Activated CD8-positive, alpha-beta T cell treated with anti-CD3 and anti-CD28 coated beads for 36 hours (primary cell): ENCODE measurements at regions of chr15 and their contacts with region 1.

Region 1: GRCh38 chr15:70466895-70467529 is 296.3 kb downstream of the UACA start:
- DNase-seq: peak; percentile 72
- ATAC-seq: peak; percentile 88
- H3K4me3 Mint-ChIP-seq: no peak overlapping the region
- H3K27ac Mint-ChIP-seq: no peak overlapping the region
- H3K4me1 Mint-ChIP-seq: no peaks in the 10 kb centered on the region
- H3K27me3 Mint-ChIP-seq: peaks cover 16% of the 10 kb centered on the region
- CTCF ChIP-seq: peak; percentile 68

Region 2: GRCh38 chr15:69475769-69476358 is 991.1 kb before region 1 on chr15:
- CTCF ChIA-PET with region 1: interaction called, 11 read pairs
- POLR2A ChIA-PET with region 1: no interaction called
- intact Hi-C with region 1: loop called (anchors 10 kb)
- DNase-seq: peak; percentile 81
- ATAC-seq: peak; percentile 89
- H3K4me3 Mint-ChIP-seq: no peak overlapping the region
- H3K27ac Mint-ChIP-seq: no peak overlapping the region
- H3K4me1 Mint-ChIP-seq: peaks cover 2% of the 10 kb centered on the region
- H3K27me3 Mint-ChIP-seq: peaks cover 9% of the 10 kb centered on the region
- CTCF ChIP-seq: peak; percentile 95

Region 3: GRCh38 chr15:69576035-69576526 is 890.9 kb before region 1 on chr15:
- CTCF ChIA-PET with region 1: interaction called, 5 read pairs
- POLR2A ChIA-PET with region 1: no interaction called
- intact Hi-C with region 1: loop called (anchors 10 kb)
- DNase-seq: peak; percentile 78
- ATAC-seq: peak; percentile 43
- H3K4me3 Mint-ChIP-seq: no peak overlapping the region
- H3K27ac Mint-ChIP-seq: no peak overlapping the region
- H3K4me1 Mint-ChIP-seq: peaks cover 32% of the 10 kb centered on the region
- H3K27me3 Mint-ChIP-seq: no peaks in the 10 kb centered on the region
- CTCF ChIP-seq: peak; percentile 69

Region 4: DNA sequence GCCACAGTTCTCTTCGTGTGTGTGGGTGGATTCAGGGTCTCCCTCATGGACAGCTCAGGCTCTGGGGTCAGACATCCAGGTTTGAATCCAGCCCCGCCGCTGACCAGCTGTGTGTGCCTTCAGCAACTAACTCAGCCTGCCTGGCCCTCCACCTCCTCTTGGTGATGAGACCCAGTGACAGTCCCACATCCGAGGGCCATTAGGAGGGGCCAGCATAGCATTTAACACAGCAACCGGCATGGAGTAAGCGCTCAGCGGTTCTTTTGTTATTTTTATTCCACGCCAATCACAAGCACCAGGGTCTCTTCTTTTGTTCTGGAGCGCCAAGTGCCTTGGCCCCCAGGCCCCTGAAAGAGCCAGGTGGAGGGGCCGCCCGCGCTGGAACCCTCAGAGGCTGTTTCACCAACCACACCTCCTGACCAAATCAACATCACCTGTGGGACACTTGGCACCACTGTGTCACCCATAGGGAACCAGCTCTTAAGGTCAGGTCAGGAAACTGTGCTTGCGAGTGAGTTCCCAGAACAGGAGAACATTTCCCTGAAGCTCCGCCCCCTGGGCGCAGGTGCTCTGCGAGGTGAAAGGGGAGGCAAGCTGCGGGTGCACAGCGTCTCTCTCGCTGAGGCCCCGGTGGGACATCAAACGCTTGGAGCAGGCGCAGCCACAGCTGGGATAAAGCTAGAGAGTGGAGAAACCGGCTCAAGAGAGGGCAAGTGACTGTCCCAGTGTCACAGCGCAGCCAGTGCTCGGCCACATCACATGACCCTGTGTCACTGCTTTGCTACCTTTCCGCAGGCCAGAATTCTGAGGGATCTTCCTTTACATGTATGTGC is 15.0 kb before region 1 on chr15:
- CTCF ChIA-PET with region 1: interaction called, 20 read pairs
- POLR2A ChIA-PET with region 1: interaction called, 3 read pairs
- intact Hi-C with region 1: no loop called
- DNase-seq: peak; percentile 74
- ATAC-seq: peak; percentile 63
- H3K4me3 Mint-ChIP-seq: no peak overlapping the region
- H3K27ac Mint-ChIP-seq: peak overlapping the region; percentile 45
- H3K4me1 Mint-ChIP-seq: peaks cover 42% of the 10 kb centered on the region
- H3K27me3 Mint-ChIP-seq: peaks cover 3% of the 10 kb centered on the region
- CTCF ChIP-seq: no peak

Region 5: DNA sequence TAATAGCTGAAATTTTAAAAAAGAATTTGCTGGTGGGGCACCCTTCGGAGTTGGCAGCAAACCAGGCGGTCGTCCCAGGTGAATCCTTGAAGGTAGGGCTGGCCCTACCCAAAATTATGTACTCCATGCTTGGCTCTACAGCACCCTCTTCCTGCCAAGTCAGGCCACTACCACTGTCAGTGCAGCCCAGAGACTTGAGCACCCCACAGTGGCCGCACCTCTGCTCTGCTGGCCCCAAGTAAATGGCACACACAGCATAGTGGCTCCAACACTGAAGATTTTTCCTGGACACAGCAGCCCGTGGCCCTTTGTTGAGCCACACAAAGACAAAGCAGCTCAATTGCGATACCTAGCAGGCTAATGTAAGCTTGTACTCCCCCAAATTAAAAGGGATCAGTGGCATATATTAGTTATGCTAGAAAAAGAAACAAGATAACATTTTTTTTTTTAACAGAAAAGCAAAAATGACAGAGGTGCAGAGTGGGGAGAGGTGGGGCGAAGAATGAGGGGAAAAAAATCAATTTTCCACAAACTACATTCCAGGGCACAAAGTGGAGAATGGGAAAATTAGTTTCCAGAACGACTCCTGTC is 45.9 kb after region 1 on chr15:
- CTCF ChIA-PET with region 1: interaction called, 37 read pairs
- POLR2A ChIA-PET with region 1: no interaction called
- intact Hi-C with region 1: no loop called
- DNase-seq: peak; percentile 85
- ATAC-seq: peak; percentile 88
- H3K4me3 Mint-ChIP-seq: no peak overlapping the region
- H3K27ac Mint-ChIP-seq: no peak overlapping the region
- H3K4me1 Mint-ChIP-seq: peaks cover 22% of the 10 kb centered on the region
- H3K27me3 Mint-ChIP-seq: peaks cover 2% of the 10 kb centered on the region
- CTCF ChIP-seq: peak; percentile 98

Region 6: DNA sequence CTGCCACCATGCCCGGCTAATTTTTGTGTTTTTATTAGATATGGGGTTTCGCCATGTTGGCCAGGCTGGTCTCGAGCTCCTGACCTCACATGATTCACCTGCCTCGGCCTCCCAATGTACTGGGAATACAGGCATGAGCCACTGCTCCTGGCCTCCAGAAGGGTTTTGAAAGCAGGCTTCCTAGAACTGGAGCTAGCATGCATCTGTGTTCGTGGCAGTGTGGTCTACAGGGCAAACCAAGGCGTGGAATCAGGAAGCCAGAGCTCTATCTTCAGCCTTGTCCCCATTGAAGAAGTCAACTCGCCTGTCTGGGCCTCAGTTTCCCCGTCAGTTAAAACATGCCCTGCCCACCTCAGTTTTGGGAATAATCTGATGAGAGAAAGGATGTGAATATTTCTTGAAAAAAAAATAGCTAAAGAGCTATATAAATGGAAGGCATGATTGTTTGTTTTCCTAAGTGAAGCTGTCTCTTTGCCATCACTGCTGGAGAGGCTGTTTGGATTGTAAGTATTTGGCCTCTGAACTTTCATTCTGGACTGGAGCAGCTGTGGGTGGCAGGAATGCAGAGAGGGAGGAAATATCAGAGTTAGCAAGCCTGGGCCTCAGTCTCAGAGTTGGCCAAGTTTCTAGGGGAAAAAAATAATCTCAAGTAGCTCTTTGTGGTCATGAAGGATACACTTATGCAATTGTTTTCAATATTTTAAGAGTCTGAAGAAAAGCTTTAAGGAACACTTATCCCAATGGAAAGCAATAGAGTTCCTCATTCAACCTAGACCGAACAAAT is 332.8 kb after region 1 on chr15:
- CTCF ChIA-PET with region 1: no interaction called
- POLR2A ChIA-PET with region 1: no interaction called
- intact Hi-C with region 1: no loop called
- DNase-seq: no peak
- ATAC-seq: no peak
- H3K4me3 Mint-ChIP-seq: no peak overlapping the region
- H3K27ac Mint-ChIP-seq: no peak overlapping the region
- H3K4me1 Mint-ChIP-seq: no peaks in the 10 kb centered on the region
- H3K27me3 Mint-ChIP-seq: peaks cover 4% of the 10 kb centered on the region
- CTCF ChIP-seq: no peak